HEK293T (cell line): ENCODE measurements at regions of chr3 and their contacts with region 1.

Region 1: GRCh38 chr3:113514265-113514769 is 639 bp downstream of the SPICE1 start:
- DNase-seq: no peak

Region 2: DNA sequence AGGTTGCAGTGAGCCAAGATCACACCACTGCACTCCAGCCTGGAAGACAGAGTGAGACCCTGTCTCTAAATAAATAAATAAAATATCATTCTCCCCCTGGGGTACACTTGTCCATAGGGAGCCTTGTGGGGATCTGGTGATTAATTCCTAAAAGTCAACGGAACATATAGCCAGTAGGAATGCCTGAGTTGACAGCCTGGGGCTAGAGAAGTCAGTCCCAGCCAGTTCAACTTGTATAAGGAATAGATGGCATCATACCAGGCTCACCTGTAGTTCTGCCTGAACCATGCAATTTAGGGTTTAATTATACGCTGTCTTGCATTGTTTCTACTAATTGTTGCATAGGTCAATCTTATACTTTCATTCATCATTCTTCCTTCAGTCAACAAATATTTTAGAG is 308.8 kb before region 1 on chr3:
- CTCF ChIA-PET with region 1: no interaction called
- POLR2A ChIA-PET with region 1: no interaction called
- DNase-seq: no peak

Region 3: GRCh38 chr3:113405180-113405579 is 109.1 kb before region 1 on chr3:
- CTCF ChIA-PET with region 1: no interaction called
- POLR2A ChIA-PET with region 1: no interaction called
- DNase-seq: no peak

Region 4: GRCh38 chr3:113495035-113495434 is 19.3 kb before region 1 on chr3:
- CTCF ChIA-PET with region 1: interaction called, 4 read pairs
- POLR2A ChIA-PET with region 1: interaction called, 13 read pairs
- DNase-seq: peak; percentile 12

Region 5: DNA sequence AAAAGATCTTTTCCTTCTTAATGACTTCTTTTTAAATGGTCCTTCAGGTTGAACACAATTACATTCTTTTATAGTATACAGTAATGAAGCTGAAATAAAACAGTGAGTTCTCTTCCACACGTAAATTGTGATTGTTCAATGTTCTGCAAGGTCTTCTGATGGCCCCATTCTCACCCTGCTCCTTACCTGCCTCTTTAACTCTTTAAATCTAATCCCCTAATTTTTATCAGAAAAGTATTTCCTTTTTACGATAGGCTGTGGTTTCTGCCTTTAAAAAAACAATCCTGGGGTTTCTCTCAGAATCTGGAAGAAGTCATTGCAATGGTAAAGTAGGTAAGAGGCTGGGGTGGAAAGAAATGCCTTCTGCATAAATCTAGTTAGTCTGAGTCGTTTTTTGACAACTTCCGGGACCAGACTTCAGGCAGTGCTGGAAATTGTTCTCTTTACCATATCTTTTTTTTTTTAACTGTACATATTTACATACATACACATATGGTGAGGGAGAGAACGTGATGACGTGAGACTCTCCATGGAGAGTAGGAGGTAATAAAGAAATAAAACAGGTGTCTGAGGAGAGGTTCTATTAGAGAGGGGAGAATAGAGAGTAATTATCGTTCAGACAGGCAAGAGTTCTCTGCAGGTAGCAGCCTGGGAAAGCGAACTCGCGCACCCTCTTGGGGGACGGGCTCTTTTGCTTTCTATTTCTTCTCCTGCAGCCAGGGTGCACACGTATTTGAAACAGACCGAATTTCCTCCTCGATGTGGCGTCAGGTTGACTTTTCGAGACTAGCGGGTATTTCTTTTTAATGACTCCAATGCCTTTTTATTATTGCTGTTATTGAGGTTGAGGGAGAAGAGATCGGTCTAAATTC is 17.7 kb after region 1 on chr3 and contains the start of gene SIDT1:
- CTCF ChIA-PET with region 1: interaction called, 3 read pairs
- POLR2A ChIA-PET with region 1: interaction called, 24 read pairs
- DNase-seq: peak; percentile 53

Region 6: GRCh38 chr3:113745273-113746068 is 231.2 kb after region 1 on chr3:
- CTCF ChIA-PET with region 1: no interaction called
- POLR2A ChIA-PET with region 1: interaction called, 13 read pairs
- DNase-seq: peak; percentile 66

Region 7: DNA sequence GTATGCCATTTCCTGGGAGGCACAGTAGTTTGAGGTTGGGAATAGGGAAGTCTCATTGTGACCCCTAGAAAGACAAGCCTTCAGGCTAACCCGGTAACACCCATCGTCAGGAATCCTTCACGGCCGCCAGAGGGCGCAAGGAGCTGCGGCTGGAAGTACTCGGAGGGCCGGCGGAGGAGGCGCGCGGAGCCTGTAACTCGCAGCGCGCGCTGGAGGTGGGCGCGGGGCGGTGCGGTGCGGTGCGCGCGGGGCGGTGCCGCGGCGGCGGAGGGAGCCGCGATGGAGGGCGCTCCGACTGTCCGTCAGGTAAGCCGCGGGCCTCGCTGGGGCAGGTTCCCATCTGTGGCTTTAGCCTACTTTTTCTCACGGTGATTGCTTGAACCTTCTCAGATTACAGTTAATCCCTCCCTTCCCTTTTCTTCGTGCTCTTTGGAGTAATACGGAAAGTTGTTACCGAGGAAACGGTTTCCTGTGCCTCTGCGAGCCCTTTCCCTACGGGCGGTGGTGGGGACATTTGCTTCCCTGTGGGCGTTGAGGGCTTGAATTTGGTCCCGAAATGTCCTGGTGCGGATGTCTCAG is 324.4 kb after region 1 on chr3 and contains the start of gene GRAMD1C:
- CTCF ChIA-PET with region 1: no interaction called
- POLR2A ChIA-PET with region 1: no interaction called
- DNase-seq: peak; percentile 89

Region 8: DNA sequence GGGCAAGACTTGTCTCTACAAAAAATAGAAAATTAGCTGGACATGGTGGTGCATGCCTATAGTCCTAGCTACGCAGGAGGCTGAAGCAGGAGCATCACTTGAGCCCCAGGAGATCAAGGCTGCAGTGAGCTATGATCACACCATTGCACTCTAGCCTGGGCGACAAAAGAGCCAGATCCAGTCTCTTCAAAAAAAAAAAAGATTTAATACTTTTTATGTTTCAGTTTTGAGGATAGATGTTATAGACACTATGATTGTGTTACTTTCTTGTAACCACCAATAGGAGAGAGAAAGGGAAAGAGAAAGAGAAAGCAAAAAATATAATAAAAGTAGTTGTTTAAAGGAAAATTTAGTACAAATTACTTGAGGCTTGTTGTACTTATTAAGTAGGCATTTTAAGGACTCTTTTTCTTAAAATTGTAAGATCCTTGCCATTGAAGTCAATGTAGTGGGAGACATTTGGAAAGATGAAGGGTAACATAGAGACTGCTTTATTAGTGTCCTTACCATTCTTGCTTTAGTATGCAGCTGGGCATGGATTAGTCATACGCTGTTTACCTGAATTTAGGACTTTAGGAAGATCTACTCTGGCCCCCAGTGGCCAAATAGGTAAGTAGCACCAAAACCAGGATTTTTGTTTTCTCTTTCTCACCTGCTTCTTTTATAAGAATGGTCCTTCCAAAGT is 398.4 kb after region 1 on chr3:
- CTCF ChIA-PET with region 1: no interaction called
- POLR2A ChIA-PET with region 1: no interaction called
- DNase-seq: peak; percentile 37